ENCODE measurements at regions of chr2 and their contacts with region 1.

Region 1: DNA sequence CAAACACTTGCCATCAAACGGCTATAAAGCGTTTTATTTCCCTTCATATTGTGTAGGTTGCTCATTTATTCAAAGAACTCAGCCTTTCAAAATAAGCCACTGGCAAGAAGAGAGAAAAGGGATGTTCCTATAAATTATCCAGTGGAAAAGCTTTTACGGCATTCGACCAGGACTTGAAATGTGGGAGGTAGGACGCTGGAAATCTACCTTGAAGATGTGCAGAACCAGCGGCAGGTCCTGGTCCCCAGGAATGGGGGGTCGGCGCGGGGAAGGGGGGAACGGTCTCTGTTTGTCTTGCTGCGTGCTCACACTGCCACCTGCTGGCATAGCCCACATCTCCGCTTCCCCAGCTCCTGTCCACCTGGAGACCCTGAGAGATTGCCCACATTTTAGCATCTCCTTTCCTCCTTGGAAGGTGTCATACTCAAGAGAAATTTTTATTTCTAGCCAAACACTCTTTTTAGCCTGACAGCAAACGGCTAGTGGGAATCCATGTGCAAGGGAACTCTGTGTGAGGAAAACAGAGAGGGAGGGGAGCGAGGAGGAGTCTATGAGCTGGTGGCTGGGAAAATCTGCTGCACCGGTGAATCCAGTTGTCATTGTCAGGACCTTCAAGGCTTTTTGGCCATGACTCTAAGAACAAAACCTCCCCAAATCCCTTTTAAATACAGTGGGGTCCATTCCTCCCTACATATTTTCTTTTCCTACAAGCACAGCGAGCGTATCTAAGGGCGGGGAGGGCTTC is 349.0 kb upstream of the PKDCC start:
- DNase-seq: peak; percentile 21
- H3K4me3 ChIP-seq: no peak overlapping the region
- H3K27ac ChIP-seq: no peak overlapping the region
- H3K4me1 ChIP-seq: no peaks in the 10 kb centered on the region
- H3K27me3 ChIP-seq: no peaks in the 10 kb centered on the region
- CTCF ChIP-seq: peak; percentile 55 to 84
- POLR2A ChIP-seq: no peak

Region 2: GRCh38 chr2:39837856-39838453 is 1860.9 kb before region 1 on chr2:
- CTCF ChIA-PET with region 1: interaction called, 22 read pairs
- POLR2A ChIA-PET with region 1: no interaction called
- dilution Hi-C with region 1: no loop called
- intact Hi-C with region 1: no loop called
- DNase-seq: peak; percentile 18
- H3K4me3 ChIP-seq: no peak overlapping the region
- H3K27ac ChIP-seq: no peak overlapping the region
- H3K4me1 ChIP-seq: no peaks in the 10 kb centered on the region
- H3K27me3 ChIP-seq: no peaks in the 10 kb centered on the region
- CTCF ChIP-seq: peak; percentile 81 to 84
- POLR2A ChIP-seq: no peak

Region 3: GRCh38 chr2:40212804-40213470 is 1485.9 kb before region 1 on chr2:
- CTCF ChIA-PET with region 1: interaction called, 13 read pairs
- POLR2A ChIA-PET with region 1: no interaction called
- dilution Hi-C with region 1: no loop called
- intact Hi-C with region 1: no loop called
- DNase-seq: peak; percentile 22
- H3K4me3 ChIP-seq: no peak overlapping the region
- H3K27ac ChIP-seq: no peak overlapping the region
- H3K4me1 ChIP-seq: no peaks in the 10 kb centered on the region
- H3K27me3 ChIP-seq: peaks cover 0 to 1% of the 10 kb centered on the region in 2 experiments
- CTCF ChIP-seq: peak in 1 of 2 donors; percentile 32
- POLR2A ChIP-seq: no peak

Region 4: DNA sequence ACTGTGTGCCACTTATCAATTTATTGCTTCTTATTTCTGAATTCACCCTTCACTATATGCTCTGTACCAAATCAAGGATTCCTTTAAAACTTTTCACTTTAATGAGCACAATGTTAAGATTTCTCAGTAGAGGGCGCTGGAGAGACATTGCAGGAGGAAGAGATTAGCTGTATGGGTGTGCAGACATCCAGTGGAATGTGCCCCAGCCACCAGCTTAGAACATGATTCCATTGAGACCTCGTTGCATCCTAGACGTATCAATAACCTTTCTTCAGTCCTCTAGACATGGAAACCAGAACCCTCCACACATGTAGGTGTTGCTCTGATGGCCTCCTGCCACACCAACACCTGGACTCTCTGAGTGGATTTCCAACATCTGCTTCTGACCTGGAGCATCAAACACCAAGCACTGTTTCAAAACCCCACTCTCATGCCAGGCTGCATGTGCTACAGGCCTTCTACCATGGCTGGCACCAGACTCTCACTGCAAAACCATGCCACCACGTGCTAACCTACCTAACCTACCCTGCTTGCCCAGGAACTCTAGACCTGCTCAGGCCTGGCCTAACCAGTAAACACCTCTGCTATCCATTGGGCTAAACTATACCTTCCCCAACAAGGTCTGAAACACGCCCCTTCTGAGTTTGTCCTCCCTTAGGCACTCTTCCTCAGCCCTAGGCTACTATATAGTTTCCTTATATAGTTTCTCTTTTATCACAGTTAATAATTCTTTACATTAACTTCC is 284.2 kb before region 1 on chr2:
- CTCF ChIA-PET with region 1: interaction called, 89 read pairs
- POLR2A ChIA-PET with region 1: no interaction called
- dilution Hi-C with region 1: no loop called
- intact Hi-C with region 1: loop called (anchors 1 kb)
- DNase-seq: peak; percentile 39
- H3K4me3 ChIP-seq: no peak overlapping the region
- H3K27ac ChIP-seq: no peak overlapping the region
- H3K4me1 ChIP-seq: no peaks in the 10 kb centered on the region
- H3K27me3 ChIP-seq: no peaks in the 10 kb centered on the region
- CTCF ChIP-seq: peak; percentile 37 to 44
- POLR2A ChIP-seq: no peak

Region 5: DNA sequence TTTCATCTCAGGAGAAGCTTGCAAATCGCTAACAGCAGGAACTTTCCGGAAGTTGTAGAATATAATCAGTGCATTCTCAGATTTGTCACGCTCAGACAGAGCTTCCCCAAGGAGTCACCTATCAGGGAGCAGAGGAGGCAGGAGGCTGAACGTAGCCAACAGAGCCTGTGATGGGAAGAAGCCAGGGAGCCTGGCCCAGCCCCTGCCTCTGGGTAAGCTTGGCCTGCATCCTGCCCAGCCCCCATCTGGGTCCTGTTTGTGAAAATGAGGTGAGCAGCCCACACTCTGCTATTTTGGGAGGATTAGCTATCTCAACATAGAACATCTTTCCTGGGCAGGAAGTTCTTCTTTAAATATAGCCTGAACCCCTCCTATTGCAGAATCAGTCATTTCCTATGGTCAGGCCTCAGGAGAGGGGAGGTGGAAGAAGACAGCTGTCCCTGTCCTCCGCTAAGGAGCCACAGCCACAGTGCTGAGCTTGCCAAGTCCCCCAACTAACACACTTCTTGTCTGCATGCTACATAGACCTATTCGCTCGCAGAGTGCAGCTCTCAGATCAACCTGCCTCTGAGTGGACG is 329.8 kb after region 1 on chr2:
- CTCF ChIA-PET with region 1: no interaction called
- POLR2A ChIA-PET with region 1: no interaction called
- dilution Hi-C with region 1: no loop called
- intact Hi-C with region 1: no loop called
- DNase-seq: no peak
- H3K4me3 ChIP-seq: no peak overlapping the region
- H3K27ac ChIP-seq: no peak overlapping the region
- H3K4me1 ChIP-seq: peaks cover 16% of the 10 kb centered on the region
- H3K27me3 ChIP-seq: peaks cover 5 to 7% of the 10 kb centered on the region in 2 experiments
- CTCF ChIP-seq: no peak
- POLR2A ChIP-seq: no peak